ENCODE measurements at regions of chr17 and their contacts with region 1.

Region 1: DNA sequence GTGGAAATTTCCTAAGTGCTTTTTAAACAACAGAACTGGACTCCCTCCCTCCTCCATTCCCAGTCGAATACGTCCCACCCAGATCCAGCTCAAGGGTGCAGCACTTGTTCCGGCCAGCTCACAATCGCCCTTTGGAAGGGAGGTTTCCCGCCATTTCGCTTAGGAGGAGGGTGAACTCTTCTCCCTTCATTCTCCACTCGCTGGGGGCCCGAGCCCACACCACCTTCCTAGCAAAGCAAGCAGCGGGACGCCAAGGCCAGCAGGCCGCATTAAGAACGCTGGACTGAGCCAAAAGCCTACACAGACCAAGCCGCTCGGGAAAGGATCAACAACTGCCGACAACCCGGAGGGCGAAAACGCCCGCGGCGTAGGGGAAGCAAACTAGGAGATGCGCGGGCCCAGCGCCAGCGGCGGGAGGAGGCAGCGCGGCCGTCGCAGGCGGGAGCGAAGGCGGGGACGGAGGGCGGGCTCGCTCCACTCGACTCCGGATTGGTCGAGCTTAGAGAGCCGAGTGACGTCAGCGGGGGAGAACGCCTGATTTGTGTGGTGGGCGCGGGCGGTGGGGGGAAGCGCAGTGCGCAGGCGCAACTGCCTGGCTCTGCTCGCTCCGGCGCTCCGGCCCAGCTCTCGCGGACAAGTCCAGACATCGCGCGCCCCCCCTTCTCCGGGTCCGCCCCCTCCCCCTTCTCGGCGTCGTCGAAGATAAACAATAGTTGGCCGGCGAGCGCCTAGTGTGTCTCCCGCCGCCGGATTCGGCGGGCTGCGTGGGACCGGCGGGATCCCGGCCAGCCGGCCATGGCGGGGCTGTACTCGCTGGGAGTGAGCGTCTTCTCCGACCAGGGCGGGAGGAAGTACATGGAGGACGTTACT is at the start of gene PPM1D:
- DNase-seq: peak; percentile 100
- H3K4me3 ChIP-seq: peak within 1 kb of the TSS; percentile 64 to 98 (median 88)
- H3K27ac ChIP-seq: peak within 1 kb of the TSS; percentile 97 to 99 (median 98)
- H3K4me1 ChIP-seq: peaks cover 0 to 31% (median 23%) of the 10 kb centered on the region in 4 donors
- H3K27me3 ChIP-seq: no peaks in the 10 kb centered on the region
- CTCF ChIP-seq: peak in 1 of 4 experiments; percentile 36
- EP300 ChIP-seq: peak in 1 of 4 donors; percentile 72
- POLR2A ChIP-seq: peak; percentile 27 to 89
- total RNA-seq, gene PPM1D: 9.6 to 13.8 (median 10.6) TPM

Region 2: DNA sequence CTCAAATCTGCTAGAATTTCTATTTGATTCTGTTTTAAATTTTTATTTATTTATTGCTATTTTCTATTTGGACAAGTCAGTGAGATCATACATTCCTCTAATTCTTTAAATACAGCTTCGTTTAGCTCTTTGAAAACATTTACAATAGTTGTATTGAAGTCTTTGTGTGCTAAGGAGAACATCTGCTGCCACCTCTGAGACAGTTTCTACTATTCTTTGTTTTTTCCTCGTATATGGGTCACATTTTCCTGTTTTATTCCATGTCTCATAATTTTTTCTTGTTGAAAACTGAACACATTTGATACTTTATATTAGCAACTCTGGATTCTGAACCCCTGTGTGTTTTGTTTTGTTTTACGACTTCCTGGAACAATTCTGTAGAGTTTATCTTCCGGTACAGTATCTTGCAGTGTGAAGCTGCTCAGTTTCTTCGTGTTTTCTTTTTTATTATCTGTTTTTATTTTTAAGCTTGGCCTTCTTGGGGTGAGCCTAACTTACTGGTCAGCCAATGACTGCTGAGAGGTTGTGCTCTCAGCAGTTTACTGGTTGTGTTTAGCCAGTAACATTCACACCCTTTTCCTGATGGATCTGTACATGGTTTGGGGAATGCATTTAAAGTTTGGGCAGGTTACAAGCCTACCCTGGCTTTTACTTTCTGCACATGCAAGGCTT is 351.1 kb before region 1 on chr17:
- intact Hi-C with region 1: no loop called
- DNase-seq: no peak
- H3K4me3 ChIP-seq: no peak overlapping the region
- H3K27ac ChIP-seq: no peak overlapping the region
- H3K4me1 ChIP-seq: no peaks in the 10 kb centered on the region
- H3K27me3 ChIP-seq: no peaks in the 10 kb centered on the region
- CTCF ChIP-seq: no peak
- EP300 ChIP-seq: no peak
- POLR2A ChIP-seq: no peak

Region 3: DNA sequence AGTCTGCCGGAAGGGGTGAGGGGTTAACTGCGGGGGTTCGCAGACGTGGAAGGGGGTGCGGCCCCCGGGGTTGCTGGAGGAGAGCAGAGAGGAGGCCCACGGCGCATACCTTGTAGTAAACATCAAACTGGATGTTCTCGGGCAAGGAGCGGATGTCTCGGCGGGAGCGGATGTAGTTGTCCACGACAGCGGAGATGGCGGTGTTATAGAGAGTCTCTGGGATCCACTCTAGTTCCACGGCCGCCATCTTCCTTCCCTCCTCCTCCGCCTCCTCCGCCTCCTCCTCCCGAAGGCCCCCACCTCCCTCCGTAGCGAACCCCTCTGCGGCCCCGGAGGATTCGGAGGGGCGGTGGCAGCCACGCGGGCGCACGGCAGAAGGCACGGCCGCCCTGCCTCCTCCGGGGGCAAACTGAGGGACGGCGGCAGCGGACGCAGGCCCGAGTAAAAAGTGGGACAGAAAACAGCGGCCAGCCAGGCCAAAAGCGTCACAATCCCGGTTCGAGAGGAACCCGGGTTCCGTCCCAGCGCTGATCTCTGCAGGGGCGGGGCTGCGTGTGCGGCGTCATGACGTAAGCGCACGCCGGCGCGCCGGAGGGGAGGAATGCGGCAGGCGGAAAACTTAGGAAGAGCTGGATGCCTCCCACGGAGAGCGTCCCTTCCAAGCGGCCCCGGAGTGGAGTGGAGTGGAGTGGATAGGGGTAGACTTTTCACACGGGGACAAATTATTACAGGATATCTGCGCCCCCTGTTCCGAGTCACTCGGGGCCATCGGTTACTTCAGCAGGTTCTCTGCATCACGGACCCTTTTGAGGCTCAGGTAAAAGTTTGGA is 74.0 kb before region 1 on chr17 and contains the start of gene APPBP2:
- intact Hi-C with region 1: loop called (anchors 1 kb)
- DNase-seq: peak; percentile 94
- H3K4me3 ChIP-seq: peak within 1 kb of the TSS; percentile 79 to 90 (median 82)
- H3K27ac ChIP-seq: peak within 1 kb of the TSS; percentile 98 to 99 (median 98)
- H3K4me1 ChIP-seq: peaks cover 0 to 45% (median 40%) of the 10 kb centered on the region in 4 donors
- H3K27me3 ChIP-seq: no peaks in the 10 kb centered on the region
- CTCF ChIP-seq: no peak
- EP300 ChIP-seq: no peak
- POLR2A ChIP-seq: peak; percentile 73 to 84
- total RNA-seq, gene APPBP2: 26.2 to 36.0 (median 33.8) TPM

Region 4: GRCh38 chr17:60568561-60568960 is 31.3 kb before region 1 on chr17:
- intact Hi-C with region 1: loop called (anchors 5 kb)
- DNase-seq: no peak
- H3K4me3 ChIP-seq: no peak overlapping the region
- H3K27ac ChIP-seq: no peak overlapping the region
- H3K4me1 ChIP-seq: peaks cover 0 to 12% (median 7%) of the 10 kb centered on the region in 4 donors
- H3K27me3 ChIP-seq: no peaks in the 10 kb centered on the region
- CTCF ChIP-seq: no peak
- EP300 ChIP-seq: no peak
- POLR2A ChIP-seq: no peak

Region 5: GRCh38 chr17:60577147-60577915 is 22.5 kb before region 1 on chr17:
- intact Hi-C with region 1: loop called (anchors 2 kb)
- DNase-seq: peak; percentile 74
- H3K4me3 ChIP-seq: peak overlapping the region; percentile 20 to 50 (median 39)
- H3K27ac ChIP-seq: peak overlapping the region; percentile 73 to 88 (median 82)
- H3K4me1 ChIP-seq: peaks cover 0 to 39% (median 25%) of the 10 kb centered on the region in 4 donors
- H3K27me3 ChIP-seq: no peaks in the 10 kb centered on the region
- CTCF ChIP-seq: peak in 3 of 4 experiments; percentile 7 to 33 (median 25)
- EP300 ChIP-seq: no peak
- POLR2A ChIP-seq: no peak

Region 6: DNA sequence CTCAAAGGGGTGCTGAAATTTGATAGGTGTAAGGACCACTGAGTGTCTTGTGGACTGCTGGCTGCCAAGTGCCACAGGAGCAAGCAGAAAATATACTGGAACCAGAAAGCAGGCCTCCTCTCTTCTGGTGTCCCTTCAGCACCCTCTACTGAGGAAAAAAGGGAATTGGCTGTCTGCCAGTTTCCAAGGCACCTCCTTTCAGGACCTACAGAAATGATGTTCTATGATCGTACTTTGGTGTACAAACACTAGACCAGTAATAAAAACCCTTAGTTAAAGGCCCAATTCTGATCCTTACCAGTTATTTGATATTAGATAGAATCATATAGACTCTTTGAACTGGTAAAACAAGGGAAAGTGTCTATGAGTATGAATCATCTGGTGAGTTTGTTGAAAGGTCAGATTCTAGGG is 42.0 kb after region 1 on chr17:
- intact Hi-C with region 1: loop called (anchors 2 kb)
- DNase-seq: peak; percentile 78
- H3K4me3 ChIP-seq: no peak overlapping the region
- H3K27ac ChIP-seq: no peak overlapping the region
- H3K4me1 ChIP-seq: peaks cover 0 to 22% (median 9%) of the 10 kb centered on the region in 4 donors
- H3K27me3 ChIP-seq: no peaks in the 10 kb centered on the region
- CTCF ChIP-seq: peak in 3 of 4 experiments; percentile 24 to 44 (median 32)
- EP300 ChIP-seq: no peak
- POLR2A ChIP-seq: no peak

Region 7: DNA sequence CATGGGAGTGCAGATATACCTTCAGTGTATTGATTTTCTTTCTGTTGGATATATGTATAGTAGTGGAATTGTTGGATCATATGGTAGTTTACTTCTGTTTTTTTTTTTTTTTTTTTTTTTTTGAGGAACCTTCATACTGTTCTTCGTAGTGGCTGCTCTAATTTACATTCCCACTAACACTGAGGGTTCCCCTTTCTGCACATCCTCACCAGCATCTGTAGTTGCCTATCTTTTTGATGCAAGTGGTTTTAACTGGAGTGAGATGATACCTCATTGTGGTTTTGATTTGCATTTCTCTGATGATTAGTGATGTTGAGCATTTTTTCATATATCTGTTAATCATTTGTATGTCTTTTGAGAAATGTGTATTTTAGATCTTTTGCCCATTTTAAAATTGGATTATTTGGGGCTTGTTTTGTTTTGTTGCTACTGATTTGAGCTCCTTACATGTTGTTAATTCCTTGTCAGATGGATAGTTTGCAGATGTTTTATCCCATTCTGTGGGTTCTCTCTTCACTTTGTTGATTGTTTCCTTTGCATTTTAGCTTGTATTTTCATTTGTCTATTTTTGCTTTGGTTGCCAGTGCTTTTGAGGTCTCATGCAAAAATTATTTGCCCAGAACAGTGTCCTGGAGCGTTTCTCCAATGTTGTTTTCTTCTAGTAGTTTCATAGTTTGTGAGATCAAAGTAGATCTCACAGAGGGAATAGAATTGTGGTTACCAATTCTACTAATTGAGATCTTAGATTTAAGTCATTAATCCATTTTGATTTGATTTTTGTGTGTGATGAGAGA is 52.8 kb after region 1 on chr17:
- intact Hi-C with region 1: no loop called
- DNase-seq: no peak
- H3K4me3 ChIP-seq: no peak overlapping the region
- H3K27ac ChIP-seq: no peak overlapping the region
- H3K4me1 ChIP-seq: no peaks in the 10 kb centered on the region
- H3K27me3 ChIP-seq: no peaks in the 10 kb centered on the region
- CTCF ChIP-seq: no peak
- EP300 ChIP-seq: no peak
- POLR2A ChIP-seq: no peak

Region 8: GRCh38 chr17:60677308-60678124 is 77.7 kb after region 1 on chr17 and contains the start of gene BCAS3:
- intact Hi-C with region 1: loop called (anchors 2 kb)
- DNase-seq: peak; percentile 99
- H3K4me3 ChIP-seq: peak within 1 kb of the TSS; percentile 70 to 90 (median 88)
- H3K27ac ChIP-seq: peak within 1 kb of the TSS; percentile 81 to 86 (median 82)
- H3K4me1 ChIP-seq: peaks cover 0 to 14% (median 11%) of the 10 kb centered on the region in 4 donors
- H3K27me3 ChIP-seq: no peaks in the 10 kb centered on the region
- CTCF ChIP-seq: no peak
- EP300 ChIP-seq: no peak
- POLR2A ChIP-seq: peak; percentile 63 to 75
- total RNA-seq, gene BCAS3: 28.5 to 38.5 (median 31.8) TPM